Heart right ventricle (tissue), 16 donors: ENCODE measurements at regions of chr5 and their contacts with region 1.

Region 1: DNA sequence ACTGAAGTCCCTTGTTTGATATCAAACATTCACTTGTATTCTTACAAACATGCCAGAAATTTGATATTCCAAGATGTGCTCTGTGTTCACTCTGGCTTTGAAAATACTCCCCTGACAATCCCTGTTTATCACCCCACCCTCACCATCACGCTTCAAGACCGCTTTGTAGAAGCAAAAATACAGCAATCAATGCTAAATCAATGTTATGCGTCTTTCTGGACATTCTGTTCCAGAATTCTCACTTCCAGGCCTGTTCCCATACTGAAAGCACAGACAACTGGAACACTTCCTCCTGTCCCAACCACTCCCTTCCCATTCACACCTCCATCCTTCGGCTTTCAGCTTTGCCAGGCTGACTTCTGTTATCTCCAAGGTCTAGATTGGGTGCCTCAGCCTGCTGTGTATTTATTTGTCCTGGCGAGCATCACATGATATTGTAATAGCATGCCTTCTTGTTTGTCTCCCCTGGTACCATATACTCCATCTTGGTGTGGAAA is 72.8 kb downstream of the SNCAIP start:
- DNase-seq: no peak
- ATAC-seq: peak in 2 of 8 donors; percentile 11 to 74
- H3K4me3 ChIP-seq: no peak overlapping the region
- H3K27ac ChIP-seq: no peak overlapping the region
- H3K4me1 ChIP-seq: peaks cover 0 to 4% (median 0%) of the 10 kb centered on the region in 9 donors
- H3K27me3 ChIP-seq: no peaks in the 10 kb centered on the region
- CTCF ChIP-seq: no peak

Region 2: DNA sequence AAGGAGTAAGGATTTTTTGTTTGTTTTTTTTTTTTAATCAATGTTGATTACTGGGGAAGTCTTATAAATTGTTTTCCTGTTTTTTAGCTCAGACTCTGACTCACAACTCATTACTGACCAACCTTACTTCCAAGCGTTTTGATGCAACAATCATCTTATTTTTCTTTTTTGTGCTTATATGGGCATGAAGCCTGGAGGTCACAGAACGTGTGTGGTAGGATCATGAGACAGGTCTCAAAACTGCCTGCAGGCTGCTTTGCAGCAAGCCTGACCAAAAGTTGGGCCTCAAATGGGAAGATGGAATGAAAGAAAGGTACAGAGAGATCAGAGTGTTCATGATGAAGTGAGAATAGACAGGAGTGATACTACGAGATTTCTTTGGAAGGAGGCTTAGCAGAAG is 34.3 kb before region 1 on chr5:
- intact Hi-C with region 1: loop called in 1 of 10 experiments (anchors 1 kb)
- DNase-seq: no peak
- ATAC-seq: no peak
- H3K4me3 ChIP-seq: no peak overlapping the region
- H3K27ac ChIP-seq: no peak overlapping the region
- H3K4me1 ChIP-seq: no peaks in the 10 kb centered on the region
- H3K27me3 ChIP-seq: no peaks in the 10 kb centered on the region
- CTCF ChIP-seq: no peak